Cardiac septum (tissue), 1 donor: ENCODE measurements at regions of chr3 and their contacts with region 1.

Region 1: GRCh38 chr3:106004137-106004681 is 135.4 kb upstream of the CBLB start:
- DNase-seq: no peak

Region 2: DNA sequence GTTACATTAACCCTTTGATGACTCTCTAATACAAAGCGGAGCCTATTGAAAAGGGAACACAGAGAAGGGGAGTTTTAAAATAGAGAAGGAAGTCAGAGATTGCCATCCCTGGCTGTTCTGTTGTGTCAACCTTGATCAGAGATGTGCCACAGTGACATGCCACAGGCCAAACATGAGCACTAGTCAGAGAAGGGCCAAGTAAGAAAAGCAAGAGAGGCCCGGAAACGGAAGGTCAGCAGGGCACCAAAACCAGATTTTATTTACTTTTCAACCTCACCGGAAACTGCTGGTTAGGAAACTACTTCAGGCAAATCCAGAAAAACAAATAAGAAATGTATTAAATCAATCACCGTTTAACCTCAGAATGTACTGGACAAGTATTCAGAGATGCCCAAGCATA is 465.7 kb before region 1 on chr3:
- intact Hi-C with region 1: no loop called
- DNase-seq: no peak

Region 3: GRCh38 chr3:105780107-105780506 is 224.1 kb before region 1 on chr3:
- intact Hi-C with region 1: loop called (anchors 10 kb)
- DNase-seq: no peak

Region 4: GRCh38 chr3:105984837-105985236 is 19.4 kb before region 1 on chr3:
- intact Hi-C with region 1: no loop called
- DNase-seq: no peak